ENCODE measurements at regions of chr2 and their contacts with region 1.

Region 1: DNA sequence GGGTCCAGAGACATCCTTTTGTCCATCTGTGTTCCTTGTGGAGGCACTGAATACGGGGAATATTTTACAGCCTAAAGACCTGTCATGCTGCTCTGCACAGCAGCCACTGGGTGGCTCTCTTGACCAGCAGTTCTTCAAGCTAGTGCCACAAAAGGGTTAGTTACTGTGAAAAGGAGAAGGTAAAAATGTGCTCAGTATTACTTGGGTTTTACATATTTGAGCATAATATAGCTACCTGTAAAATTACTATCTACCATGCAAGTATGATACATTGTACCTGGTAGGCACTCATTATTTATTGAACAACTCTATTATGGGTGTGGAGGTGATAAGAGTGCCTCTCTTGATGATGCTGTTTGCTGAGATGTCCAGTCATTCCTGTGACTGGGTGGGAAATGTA is 23.6 kb downstream of the FZD5 start:
- DNase-seq: peak; percentile 55
- ATAC-seq: peak; percentile 82
- H3K4me3 Mint-ChIP-seq: no peak overlapping the region
- H3K27ac Mint-ChIP-seq: peak overlapping the region; percentile 31; the same call in 1 of the 2 replicates
- H3K4me1 Mint-ChIP-seq: peaks cover 16% of the 10 kb centered on the region
- H3K27me3 Mint-ChIP-seq: no peaks in the 10 kb centered on the region
- CTCF ChIP-seq: peak; percentile 83

Region 2: GRCh38 chr2:207725873-207726578 is 20.1 kb before region 1 on chr2:
- CTCF ChIA-PET with region 1: no interaction called
- POLR2A ChIA-PET with region 1: no interaction called
- DNase-seq: no peak
- ATAC-seq: no peak
- H3K4me3 Mint-ChIP-seq: no peak overlapping the region
- H3K27ac Mint-ChIP-seq: peak overlapping the region; percentile 57
- H3K4me1 Mint-ChIP-seq: peaks cover 17% of the 10 kb centered on the region
- H3K27me3 Mint-ChIP-seq: no peaks in the 10 kb centered on the region
- CTCF ChIP-seq: no peak

Region 3: DNA sequence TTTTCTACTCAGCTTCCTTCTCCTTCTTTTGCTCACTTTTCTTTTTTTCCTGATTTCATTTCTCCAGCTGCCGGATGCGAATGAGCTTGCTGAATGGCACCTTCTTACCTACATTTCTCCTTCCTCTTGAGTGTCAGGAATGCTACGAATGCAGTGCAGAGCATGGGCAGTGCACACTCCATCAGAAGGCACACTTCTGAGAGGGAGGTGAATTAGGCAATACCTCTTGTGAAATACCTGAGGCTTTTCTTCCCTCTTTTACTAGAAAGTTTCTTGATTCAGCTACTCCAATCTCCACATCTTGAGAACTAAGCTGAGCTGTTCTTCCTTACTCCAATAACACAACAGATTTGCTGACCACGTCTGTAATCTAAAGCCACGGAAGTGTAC is 228.1 kb after region 1 on chr2:
- CTCF ChIA-PET with region 1: interaction called, 13 read pairs
- POLR2A ChIA-PET with region 1: no interaction called
- DNase-seq: no peak
- ATAC-seq: no peak
- H3K4me3 Mint-ChIP-seq: no peak overlapping the region
- H3K27ac Mint-ChIP-seq: peak overlapping the region; percentile 66
- H3K4me1 Mint-ChIP-seq: peaks cover 42% of the 10 kb centered on the region
- H3K27me3 Mint-ChIP-seq: no peaks in the 10 kb centered on the region
- CTCF ChIP-seq: no peak

Region 4: GRCh38 chr2:208033758-208034502 is 287.8 kb after region 1 on chr2:
- CTCF ChIA-PET with region 1: interaction called, 58 read pairs
- POLR2A ChIA-PET with region 1: no interaction called
- DNase-seq: peak; percentile 61
- ATAC-seq: peak; percentile 96
- H3K4me3 Mint-ChIP-seq: no peak overlapping the region
- H3K27ac Mint-ChIP-seq: peak overlapping the region; percentile 8; the same call in 1 of the 2 replicates
- H3K4me1 Mint-ChIP-seq: no peaks in the 10 kb centered on the region
- H3K27me3 Mint-ChIP-seq: no peaks in the 10 kb centered on the region
- CTCF ChIP-seq: no peak; the same call in 1 of the 2 replicates

Region 5: DNA sequence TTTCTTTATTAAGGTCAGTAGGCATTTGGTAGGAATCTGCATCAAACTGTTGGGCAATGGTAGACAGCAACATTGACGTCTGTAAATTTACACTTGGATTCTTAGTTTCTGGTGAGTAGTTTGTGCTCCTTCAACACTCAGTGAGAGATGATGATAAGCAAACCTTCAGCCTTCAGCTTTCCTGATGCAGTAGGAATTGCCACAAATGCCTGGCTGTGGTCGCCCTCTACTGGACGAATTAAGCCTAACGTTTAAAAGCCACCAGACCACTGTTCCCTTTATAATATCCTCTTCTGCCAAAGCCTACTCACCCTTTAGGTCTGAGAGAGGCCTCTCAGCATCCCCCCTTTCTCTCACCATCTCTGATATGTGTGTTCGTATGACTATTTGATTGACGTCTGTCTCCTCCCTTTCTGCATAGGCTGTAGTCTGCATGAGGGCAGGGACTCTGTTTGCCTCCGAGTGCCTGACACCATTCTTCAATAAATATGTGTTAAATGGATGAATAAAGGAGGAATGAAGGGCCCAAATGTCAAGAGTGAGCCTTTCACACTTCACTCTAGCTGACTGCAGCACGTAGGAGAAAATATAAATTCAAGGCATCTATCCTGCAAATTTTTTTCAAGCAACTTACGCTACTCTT is 326.2 kb after region 1 on chr2:
- CTCF ChIA-PET with region 1: interaction called, 11 read pairs
- POLR2A ChIA-PET with region 1: no interaction called
- DNase-seq: peak; percentile 72
- ATAC-seq: peak; percentile 94
- H3K4me3 Mint-ChIP-seq: no peak overlapping the region
- H3K27ac Mint-ChIP-seq: no peak overlapping the region
- H3K4me1 Mint-ChIP-seq: peaks cover 4% of the 10 kb centered on the region
- H3K27me3 Mint-ChIP-seq: no peaks in the 10 kb centered on the region
- CTCF ChIP-seq: peak; percentile 56; the same call in 1 of the 2 replicates

Region 6: GRCh38 chr2:208195531-208195930 is 449.4 kb after region 1 on chr2:
- CTCF ChIA-PET with region 1: no interaction called
- POLR2A ChIA-PET with region 1: no interaction called
- DNase-seq: no peak
- ATAC-seq: no peak
- H3K4me3 Mint-ChIP-seq: no peak overlapping the region
- H3K27ac Mint-ChIP-seq: no peak overlapping the region
- H3K4me1 Mint-ChIP-seq: peaks cover 16% of the 10 kb centered on the region
- H3K27me3 Mint-ChIP-seq: no peaks in the 10 kb centered on the region
- CTCF ChIP-seq: no peak

Measured in WTC11 (cell line).